ENCODE measurements at regions of chr9 and their contacts with region 1.

Region 1: DNA sequence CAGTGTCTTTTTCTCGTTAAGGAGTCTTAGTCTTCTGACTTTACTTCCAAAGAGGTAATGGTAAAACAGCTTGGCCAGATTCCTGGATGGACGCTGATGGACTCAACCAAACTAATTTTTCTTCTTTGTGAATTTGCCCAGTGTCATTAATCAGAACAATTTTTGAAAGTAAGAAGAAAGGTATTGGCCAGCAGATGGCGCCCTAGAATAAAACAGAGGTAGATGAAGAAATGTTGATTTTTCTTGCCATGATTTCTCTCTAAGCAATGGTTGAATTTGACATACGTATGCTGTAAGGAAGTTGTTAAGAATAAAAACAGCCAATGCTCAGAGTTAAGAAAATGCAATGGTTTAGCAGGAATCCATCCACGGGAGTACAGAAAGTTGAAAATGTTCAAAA is 500.0 kb downstream of the DIRAS2 start:
- DNase-seq: peak; percentile 80
- ATAC-seq: no peak
- H3K4me3 ChIP-seq: no peak overlapping the region
- H3K4me3 Mint-ChIP-seq: no peak overlapping the region
- H3K27ac ChIP-seq: no peak overlapping the region
- H3K27ac Mint-ChIP-seq: no peak overlapping the region
- H3K4me1 ChIP-seq: no peaks in the 10 kb centered on the region
- H3K4me1 Mint-ChIP-seq: peaks cover 4% of the 10 kb centered on the region
- H3K27me3 ChIP-seq: peaks cover 0 to 4% (median 0%) of the 10 kb centered on the region in 4 experiments
- H3K27me3 Mint-ChIP-seq: peaks cover 17% of the 10 kb centered on the region
- CTCF ChIP-seq: peak; percentile 76

Region 2: GRCh38 chr9:90070931-90071660 is 71.5 kb before region 1 on chr9:
- CTCF ChIA-PET with region 1: no interaction called
- POLR2A ChIA-PET with region 1: no interaction called
- intact Hi-C with region 1: no loop called
- DNase-seq: no peak
- ATAC-seq: no peak
- H3K4me3 ChIP-seq: no peak overlapping the region
- H3K4me3 Mint-ChIP-seq: no peak overlapping the region
- H3K27ac ChIP-seq: no peak overlapping the region
- H3K27ac Mint-ChIP-seq: no peak overlapping the region
- H3K4me1 ChIP-seq: no peaks in the 10 kb centered on the region
- H3K4me1 Mint-ChIP-seq: no peaks in the 10 kb centered on the region
- H3K27me3 ChIP-seq: no peaks in the 10 kb centered on the region
- H3K27me3 Mint-ChIP-seq: peaks cover 44% of the 10 kb centered on the region
- CTCF ChIP-seq: no peak

Region 3: GRCh38 chr9:90180381-90180780 is 37.8 kb after region 1 on chr9:
- CTCF ChIA-PET with region 1: interaction called, 10 read pairs
- POLR2A ChIA-PET with region 1: no interaction called
- intact Hi-C with region 1: no loop called
- DNase-seq: no peak
- ATAC-seq: no peak
- H3K4me3 ChIP-seq: no peak overlapping the region
- H3K4me3 Mint-ChIP-seq: no peak overlapping the region
- H3K27ac ChIP-seq: no peak overlapping the region
- H3K27ac Mint-ChIP-seq: no peak overlapping the region
- H3K4me1 ChIP-seq: peaks cover 8% of the 10 kb centered on the region in 2 donors
- H3K4me1 Mint-ChIP-seq: peaks cover 30% of the 10 kb centered on the region
- H3K27me3 ChIP-seq: no peaks in the 10 kb centered on the region
- H3K27me3 Mint-ChIP-seq: no peaks in the 10 kb centered on the region
- CTCF ChIP-seq: no peak

Region 4: GRCh38 chr9:90219548-90220118 is 77.1 kb after region 1 on chr9:
- CTCF ChIA-PET with region 1: interaction called, 24 read pairs
- POLR2A ChIA-PET with region 1: no interaction called
- intact Hi-C with region 1: no loop called
- DNase-seq: peak; percentile 72
- ATAC-seq: peak; percentile 89
- H3K4me3 ChIP-seq: peak overlapping the region in 2 of 5 experiments; percentile 27 to 33
- H3K4me3 Mint-ChIP-seq: peak overlapping the region; percentile 18
- H3K27ac ChIP-seq: no peak overlapping the region
- H3K27ac Mint-ChIP-seq: no peak overlapping the region
- H3K4me1 ChIP-seq: peaks cover 6 to 7% of the 10 kb centered on the region in 2 donors
- H3K4me1 Mint-ChIP-seq: peaks cover 7% of the 10 kb centered on the region
- H3K27me3 ChIP-seq: no peaks in the 10 kb centered on the region
- H3K27me3 Mint-ChIP-seq: no peaks in the 10 kb centered on the region
- CTCF ChIP-seq: peak; percentile 80

Region 5: DNA sequence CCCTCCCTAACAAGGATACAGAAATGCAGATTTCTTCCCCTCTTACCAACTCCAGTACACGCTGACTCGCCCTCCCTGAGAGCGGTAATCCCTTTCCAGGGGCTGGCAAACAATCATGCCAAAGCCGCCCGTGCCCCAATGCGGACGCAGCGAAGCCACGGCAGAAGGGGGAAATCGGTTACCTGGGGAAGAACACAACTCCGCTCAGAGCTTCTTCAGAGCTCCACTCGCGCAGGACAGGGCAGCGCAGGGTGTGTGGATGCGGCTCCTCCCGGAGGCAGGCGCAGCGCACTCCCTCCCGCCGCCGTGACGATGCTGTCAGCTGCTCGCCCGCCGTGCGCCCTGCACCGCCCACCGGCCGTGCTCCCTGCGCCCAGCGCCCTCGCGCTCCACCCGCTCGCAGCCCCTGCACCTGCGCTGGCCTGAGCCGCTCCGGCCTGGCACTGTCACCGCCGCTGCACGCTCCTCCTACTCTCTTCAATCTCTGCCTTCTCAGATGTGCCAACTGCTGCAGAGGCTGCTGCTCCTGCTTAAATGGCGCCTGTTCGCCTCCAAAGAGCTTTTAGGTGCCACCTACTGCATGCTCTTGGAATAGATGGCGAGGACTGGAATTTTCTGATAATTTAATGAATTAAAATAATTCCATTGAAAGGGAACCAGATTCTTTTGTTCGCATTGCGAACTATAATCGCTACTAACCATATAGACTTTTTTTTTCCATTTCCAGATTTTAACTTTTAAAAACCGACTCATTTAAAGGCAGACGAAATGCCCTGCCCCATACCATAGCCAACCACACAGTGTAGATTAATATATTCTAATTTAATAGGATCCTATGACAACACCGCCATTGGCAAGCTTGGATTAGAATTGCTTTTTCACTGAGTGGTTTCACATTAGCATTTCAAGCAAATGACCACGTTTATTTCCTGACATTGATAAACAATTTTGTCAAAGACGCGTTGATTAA is 500.3 kb after region 1 on chr9 and contains the start of gene DIRAS2:
- CTCF ChIA-PET with region 1: no interaction called
- POLR2A ChIA-PET with region 1: no interaction called
- intact Hi-C with region 1: loop called (anchors 5 kb)
- DNase-seq: peak; percentile 27
- ATAC-seq: peak; percentile 63
- H3K4me3 ChIP-seq: peak within 1 kb of the TSS in 3 of 5 experiments; percentile 31 to 34 (median 32)
- H3K4me3 Mint-ChIP-seq: peak within 1 kb of the TSS; percentile 80
- H3K27ac ChIP-seq: no peak within 1 kb of the TSS
- H3K27ac Mint-ChIP-seq: no peak within 1 kb of the TSS
- H3K4me1 ChIP-seq: peaks cover 4 to 10% of the 10 kb centered on the region in 2 donors
- H3K4me1 Mint-ChIP-seq: peaks cover 10% of the 10 kb centered on the region
- H3K27me3 ChIP-seq: peaks cover 0 to 39% (median 33%) of the 10 kb centered on the region in 4 experiments
- H3K27me3 Mint-ChIP-seq: peaks cover 75% of the 10 kb centered on the region
- CTCF ChIP-seq: no peak
- total RNA-seq, gene DIRAS2: not detected in 2 replicates

Region 6: DNA sequence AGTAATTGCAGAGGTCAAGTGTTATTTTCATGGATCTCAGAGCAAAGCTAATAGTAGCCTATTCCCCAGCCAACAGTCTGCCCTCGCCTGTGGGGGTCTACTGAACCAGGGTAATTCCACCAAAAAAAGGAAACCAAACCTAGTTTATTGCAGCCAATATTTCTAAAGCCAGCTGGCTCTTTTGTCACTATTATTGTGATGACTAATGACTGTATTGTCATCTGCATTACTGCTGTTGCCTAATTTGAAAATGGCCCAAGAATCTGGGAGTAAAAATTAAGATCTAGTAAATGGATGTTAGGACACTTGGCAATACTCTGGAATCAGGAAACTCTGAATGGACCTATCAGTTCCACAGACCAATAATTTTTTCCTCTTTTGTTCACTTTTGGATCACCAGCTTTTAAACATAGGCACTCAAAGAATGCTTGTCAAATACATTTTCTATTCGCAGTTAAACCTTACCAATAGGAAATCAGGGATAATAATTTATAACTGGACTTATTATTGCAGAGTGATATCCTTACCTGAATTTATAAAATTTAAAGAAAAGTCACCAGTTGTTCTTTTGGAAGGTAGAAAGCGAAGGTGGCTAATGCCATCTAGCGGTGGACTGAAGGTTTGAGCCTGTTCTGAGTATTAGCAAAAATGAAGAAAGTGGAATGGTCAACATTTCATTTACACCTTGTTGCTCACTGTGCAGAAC is 728.2 kb after region 1 on chr9:
- CTCF ChIA-PET with region 1: interaction called, 13 read pairs
- POLR2A ChIA-PET with region 1: no interaction called
- intact Hi-C with region 1: loop called (anchors 2 kb)
- DNase-seq: peak; percentile 70
- ATAC-seq: peak; percentile 39
- H3K4me3 ChIP-seq: no peak overlapping the region
- H3K4me3 Mint-ChIP-seq: no peak overlapping the region
- H3K27ac ChIP-seq: peak overlapping the region in 1 of 2 donors; percentile 44
- H3K27ac Mint-ChIP-seq: no peak overlapping the region
- H3K4me1 ChIP-seq: no peaks in the 10 kb centered on the region
- H3K4me1 Mint-ChIP-seq: peaks cover 1% of the 10 kb centered on the region
- H3K27me3 ChIP-seq: no peaks in the 10 kb centered on the region
- H3K27me3 Mint-ChIP-seq: no peaks in the 10 kb centered on the region
- CTCF ChIP-seq: peak; percentile 99

Measured in B cell (primary cell).